Activated B cell treated with CpG ODN at 0.5 μM for 24 hours (primary cell): ENCODE measurements at regions of chr2 and their contacts with region 1.

Region 1: DNA sequence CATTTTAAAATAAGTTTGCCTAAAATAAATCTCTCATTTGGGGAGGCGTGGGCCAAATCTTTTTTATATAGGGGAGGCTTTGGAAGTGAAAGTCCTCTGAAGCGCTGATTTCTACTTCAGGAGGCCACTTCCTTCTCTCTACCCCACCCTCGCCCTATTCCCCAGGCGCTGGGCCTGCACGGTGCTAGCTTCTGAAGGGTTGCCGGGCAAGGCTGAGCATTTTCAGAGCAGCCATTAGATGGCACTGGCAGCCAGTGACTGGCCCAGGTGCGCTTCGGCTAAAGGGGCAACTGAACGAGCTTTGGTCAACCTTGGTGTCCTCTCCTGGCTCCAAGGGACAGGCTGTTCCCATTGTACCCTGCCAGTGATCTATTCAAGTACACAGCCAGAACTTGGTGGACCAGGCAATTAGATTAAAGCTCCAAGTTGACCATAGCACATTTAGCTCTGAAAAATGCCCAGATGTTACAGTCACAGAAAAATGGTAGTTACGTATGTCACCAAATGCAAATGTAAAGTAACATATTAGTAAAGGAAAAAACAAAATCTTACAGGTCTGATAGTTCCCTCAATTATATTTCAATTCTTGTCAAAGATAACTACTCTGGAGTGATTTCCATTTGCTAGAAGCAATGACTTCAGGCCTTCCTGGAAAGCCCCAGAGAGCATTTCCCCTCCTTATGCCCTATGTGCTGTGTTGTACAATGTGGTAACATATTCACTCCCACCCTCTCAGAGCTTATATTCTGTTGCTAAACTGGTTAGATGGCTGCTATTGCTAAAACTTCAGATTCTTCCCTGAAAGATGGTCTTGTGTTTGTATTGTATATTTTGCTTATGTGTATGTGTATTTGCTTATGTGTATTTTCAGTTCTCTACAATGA is 2.1 kb downstream of the POMC start:
- DNase-seq: peak; percentile 71
- ATAC-seq: peak; percentile 95
- H3K4me3 Mint-ChIP-seq: peak overlapping the region; percentile 38
- H3K27ac Mint-ChIP-seq: peak overlapping the region; percentile 65
- H3K4me1 Mint-ChIP-seq: peaks cover 33% of the 10 kb centered on the region
- H3K27me3 Mint-ChIP-seq: peaks cover 23% of the 10 kb centered on the region
- CTCF ChIP-seq: peak; percentile 20

Region 2: DNA sequence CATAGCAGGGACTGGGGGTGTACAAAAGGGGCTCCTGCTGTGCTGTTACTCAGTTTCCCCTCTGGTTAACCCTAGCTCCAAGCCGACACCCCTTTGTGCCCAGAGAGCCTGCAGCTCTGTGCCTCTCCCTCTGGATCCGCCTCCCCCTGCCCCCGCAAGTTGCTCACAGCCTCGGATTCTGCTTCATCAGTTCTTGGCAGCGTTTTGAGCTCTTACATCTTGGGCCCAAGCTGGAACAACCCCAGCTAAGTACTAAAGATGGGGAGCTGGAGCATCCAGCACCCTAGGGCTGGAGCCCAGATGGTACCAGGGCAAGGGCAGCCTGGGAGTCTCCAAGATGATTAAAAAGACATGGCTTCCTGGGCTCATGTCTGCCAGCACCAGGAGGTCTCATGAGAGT is 38.6 kb before region 1 on chr2:
- CTCF ChIA-PET with region 1: no interaction called
- POLR2A ChIA-PET with region 1: interaction called, 7 read pairs
- intact Hi-C with region 1: loop called (anchors 2 kb)
- DNase-seq: no peak
- ATAC-seq: no peak
- H3K4me3 Mint-ChIP-seq: no peak overlapping the region
- H3K27ac Mint-ChIP-seq: no peak overlapping the region
- H3K4me1 Mint-ChIP-seq: peaks cover 15% of the 10 kb centered on the region
- H3K27me3 Mint-ChIP-seq: peaks cover 19% of the 10 kb centered on the region
- CTCF ChIP-seq: no peak

Region 3: GRCh38 chr2:25228848-25229278 is 62.6 kb after region 1 on chr2:
- CTCF ChIA-PET with region 1: interaction called, 78 read pairs
- POLR2A ChIA-PET with region 1: interaction called, 6 read pairs
- intact Hi-C with region 1: loop called (anchors 1 kb)
- DNase-seq: no peak
- ATAC-seq: peak; percentile 59
- H3K4me3 Mint-ChIP-seq: no peak overlapping the region
- H3K27ac Mint-ChIP-seq: no peak overlapping the region
- H3K4me1 Mint-ChIP-seq: peaks cover 18% of the 10 kb centered on the region
- H3K27me3 Mint-ChIP-seq: no peaks in the 10 kb centered on the region
- CTCF ChIP-seq: no peak

Region 4: GRCh38 chr2:25420820-25421237 is 254.6 kb after region 1 on chr2:
- CTCF ChIA-PET with region 1: no interaction called
- POLR2A ChIA-PET with region 1: interaction called, 5 read pairs
- intact Hi-C with region 1: loop called (anchors 5 kb)
- DNase-seq: no peak
- ATAC-seq: peak; percentile 29
- H3K4me3 Mint-ChIP-seq: peak overlapping the region; percentile 93
- H3K27ac Mint-ChIP-seq: peak overlapping the region; percentile 95
- H3K4me1 Mint-ChIP-seq: peaks cover 97% of the 10 kb centered on the region
- H3K27me3 Mint-ChIP-seq: no peaks in the 10 kb centered on the region
- CTCF ChIP-seq: no peak

Region 5: GRCh38 chr2:25558262-25558661 is 392.0 kb after region 1 on chr2:
- CTCF ChIA-PET with region 1: interaction called, 4 read pairs
- POLR2A ChIA-PET with region 1: no interaction called
- intact Hi-C with region 1: loop called (anchors 2 kb)
- DNase-seq: no peak
- ATAC-seq: peak; percentile 87
- H3K4me3 Mint-ChIP-seq: peak overlapping the region; percentile 21
- H3K27ac Mint-ChIP-seq: peak overlapping the region; percentile 42
- H3K4me1 Mint-ChIP-seq: peaks cover 43% of the 10 kb centered on the region
- H3K27me3 Mint-ChIP-seq: no peaks in the 10 kb centered on the region
- CTCF ChIP-seq: no peak

Region 6: DNA sequence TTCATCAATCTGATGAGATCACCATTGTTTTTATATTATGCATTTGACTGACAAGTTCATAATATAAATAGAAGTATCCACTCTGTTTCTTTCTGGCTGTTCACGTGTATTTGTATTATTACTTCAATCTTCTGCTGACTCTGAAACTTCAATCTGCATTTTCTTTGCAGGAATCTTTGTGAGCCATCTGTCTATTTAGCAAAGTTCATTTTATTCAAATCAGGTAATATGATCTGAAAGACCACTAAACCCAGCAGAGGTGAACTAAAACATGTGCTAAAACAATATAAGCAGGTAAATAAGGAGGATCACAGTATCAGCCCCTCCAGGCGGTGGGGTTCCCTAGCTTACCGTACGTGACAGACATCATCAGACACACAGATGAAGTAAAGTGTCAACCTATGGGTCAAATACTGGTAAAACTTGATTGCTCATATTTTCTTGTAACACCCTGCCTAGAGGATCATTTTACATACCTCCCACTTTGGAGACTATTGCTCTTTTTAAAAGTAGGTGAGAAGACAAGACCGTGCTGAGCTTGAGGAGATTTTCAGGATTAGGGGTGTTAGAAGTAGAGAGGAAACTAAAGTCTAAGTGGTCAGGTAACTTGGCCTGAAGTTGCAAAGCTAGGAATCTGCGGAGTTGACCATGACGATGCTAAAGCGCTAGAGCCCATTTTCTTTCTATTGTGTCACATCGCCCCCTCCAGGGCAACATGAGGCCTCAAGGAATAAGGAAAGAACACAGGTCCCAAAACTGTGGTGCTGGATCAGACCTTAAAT is 498.1 kb after region 1 on chr2:
- CTCF ChIA-PET with region 1: interaction called, 3 read pairs
- POLR2A ChIA-PET with region 1: no interaction called
- intact Hi-C with region 1: loop called (anchors 1 kb)
- DNase-seq: no peak
- ATAC-seq: peak; percentile 42
- H3K4me3 Mint-ChIP-seq: peak overlapping the region; percentile 20
- H3K27ac Mint-ChIP-seq: no peak overlapping the region
- H3K4me1 Mint-ChIP-seq: peaks cover 7% of the 10 kb centered on the region
- H3K27me3 Mint-ChIP-seq: no peaks in the 10 kb centered on the region
- CTCF ChIP-seq: no peak